ENCODE measurements at regions of chr11 and their contacts with region 1.

Region 1: DNA sequence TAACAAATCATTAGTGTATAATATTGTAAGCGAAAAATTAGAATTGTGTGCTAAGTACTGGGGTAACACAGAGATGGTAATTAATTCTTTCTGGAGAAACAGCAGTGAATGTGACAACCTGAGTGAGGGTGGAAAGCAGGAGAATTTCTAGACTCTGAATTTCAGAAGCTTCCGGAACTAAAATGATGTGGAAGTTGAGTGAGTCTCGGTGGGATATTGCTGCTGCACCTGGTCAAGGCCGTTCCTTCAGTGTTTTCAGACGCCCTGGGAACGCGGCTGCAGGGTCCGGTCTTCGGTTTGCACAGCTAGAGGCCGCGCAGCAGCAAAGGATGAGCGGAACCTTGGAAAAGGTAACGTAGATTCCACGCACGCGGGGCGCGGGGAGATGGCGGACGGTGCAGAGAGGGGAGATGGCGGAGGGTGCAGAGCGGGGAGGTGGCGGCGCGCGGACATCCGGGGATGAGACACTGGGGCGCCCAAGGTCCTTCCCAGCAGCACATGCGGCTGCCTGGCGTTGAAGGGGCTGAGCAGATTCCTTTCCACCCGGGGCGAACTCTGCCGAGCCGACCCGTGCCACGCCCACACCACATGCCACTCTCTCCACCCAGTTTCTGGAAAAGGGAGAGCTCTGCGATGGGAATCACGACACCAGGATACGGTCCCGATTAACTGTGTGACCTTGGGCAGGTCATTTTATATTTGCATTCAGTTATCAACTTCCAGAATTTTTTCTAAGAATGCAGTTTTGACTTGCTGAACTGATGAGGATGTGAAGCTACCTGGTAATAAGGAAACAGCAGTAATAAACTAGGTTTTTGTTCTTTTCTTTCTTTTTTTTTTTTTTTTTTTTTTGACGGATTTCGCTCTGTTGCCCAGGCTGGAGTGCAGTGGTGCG is at the start of gene MRPL48:
- DNase-seq: peak; percentile 69 to 91 (median 84)
- H3K4me3 ChIP-seq: peak within 1 kb of the TSS; percentile 54 to 88 (median 75)
- H3K27ac ChIP-seq: peak within 1 kb of the TSS; percentile 83 to 99 (median 94)
- H3K27me3 ChIP-seq: no peaks in the 10 kb centered on the region
- CTCF ChIP-seq: peak in 31 of 56 donors; percentile 4 to 50 (median 24)
- total RNA-seq, gene MRPL48: 24.2 to 72.9 (median 43.4) TPM

Region 2: DNA sequence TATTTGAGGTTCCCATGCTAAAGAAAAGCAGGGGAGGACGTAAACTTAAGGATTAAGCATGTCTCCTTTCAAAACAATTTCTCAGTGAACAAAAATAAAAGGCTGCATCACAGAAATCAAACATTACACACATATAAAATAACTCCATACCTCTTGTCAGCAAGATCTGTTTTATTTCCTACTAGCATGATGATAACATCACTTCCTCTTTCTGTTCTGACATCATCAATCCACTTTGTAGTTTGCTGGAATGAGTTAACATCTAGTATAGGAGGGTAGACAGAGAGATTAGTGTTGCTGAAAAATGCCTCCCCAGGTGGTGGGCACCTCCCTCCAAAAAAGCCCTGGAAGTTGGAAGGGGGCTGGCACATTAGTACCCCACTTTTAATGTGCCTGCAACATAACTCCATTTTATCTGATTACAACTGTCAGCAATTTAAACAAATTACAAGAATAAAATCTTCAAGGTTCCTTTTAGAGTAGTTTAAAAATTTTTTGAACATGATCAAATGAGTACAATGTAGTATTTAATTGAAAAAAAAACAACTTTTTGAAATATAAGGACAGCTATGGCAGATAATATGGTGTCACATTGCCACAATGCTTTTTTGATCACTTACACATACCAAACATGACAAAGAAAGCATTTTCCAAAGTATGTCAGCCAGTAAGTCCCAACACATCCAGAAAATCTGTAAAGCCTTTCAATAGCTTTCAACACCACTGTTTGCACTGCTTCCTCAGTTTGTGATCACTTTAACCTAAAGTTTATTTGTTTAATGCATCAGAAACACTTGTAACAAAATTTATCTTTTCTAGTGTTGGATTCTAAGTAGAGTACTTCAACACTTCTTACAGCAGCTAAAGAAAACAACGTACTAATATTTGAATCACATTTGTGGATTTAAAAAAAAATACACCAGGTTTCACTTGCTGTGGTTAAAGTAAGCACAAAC is 71.5 kb before region 1 on chr11:
- intact Hi-C with region 1: no loop called
- DNase-seq: no peak
- H3K4me3 ChIP-seq: peak overlapping the region in 3 of 59 donors; percentile 2 to 17 (median 5)
- H3K27ac ChIP-seq: peak overlapping the region; percentile 0 to 82 (median 64)
- H3K27me3 ChIP-seq: no peaks in the 10 kb centered on the region
- CTCF ChIP-seq: no peak

Region 3: DNA sequence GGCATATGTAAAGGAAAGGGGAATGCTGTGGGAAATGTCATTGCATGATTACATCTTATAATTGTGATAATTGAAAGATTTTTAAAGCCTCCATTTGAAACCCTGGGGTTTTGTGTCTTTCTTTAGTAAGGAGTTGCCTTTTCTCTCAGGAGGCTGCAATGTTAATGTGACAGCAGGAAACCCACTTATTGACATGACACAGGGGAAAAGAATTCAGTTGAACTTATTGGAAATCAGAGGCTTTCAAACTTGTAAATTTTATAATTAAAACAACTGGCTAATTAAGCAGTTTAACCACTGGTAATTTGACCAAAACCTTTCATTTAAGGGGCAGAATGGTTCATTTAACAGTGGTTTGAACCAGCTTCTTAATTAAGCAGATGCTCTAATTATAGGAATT is 31.0 kb after region 1 on chr11:
- intact Hi-C with region 1: no loop called
- DNase-seq: no peak
- H3K4me3 ChIP-seq: no peak overlapping the region
- H3K27ac ChIP-seq: no peak overlapping the region
- H3K27me3 ChIP-seq: no peaks in the 10 kb centered on the region
- CTCF ChIP-seq: no peak

Region 4: DNA sequence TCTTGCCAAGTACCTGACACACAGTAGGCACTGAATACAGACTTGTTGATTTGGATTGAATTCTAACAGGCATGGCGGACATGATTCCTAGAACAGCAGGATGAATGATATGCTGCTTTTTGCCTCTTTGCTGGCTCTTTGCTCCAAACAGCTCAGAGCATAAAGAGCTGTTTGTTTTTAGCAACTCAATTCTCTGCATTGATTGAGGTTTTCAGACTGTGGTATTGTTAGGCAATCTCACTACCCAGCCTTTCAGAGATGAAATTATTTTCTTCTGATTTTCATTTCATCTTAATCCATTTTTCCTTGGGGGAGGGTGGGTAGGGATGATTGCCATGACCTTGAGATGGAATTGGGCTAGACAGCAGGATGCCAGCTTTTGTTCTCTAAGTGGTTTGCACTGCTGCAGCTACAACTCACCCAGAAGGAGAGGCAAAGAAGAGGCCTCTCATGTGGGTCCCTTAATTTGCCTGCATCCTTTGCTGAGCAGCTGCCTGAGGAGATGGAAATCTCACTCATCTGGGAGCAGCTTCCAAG is 68.2 kb after region 1 on chr11:
- intact Hi-C with region 1: loop called in 1 of 2 experiments (anchors 5 kb)
- DNase-seq: peak in 3 of 10 donors; percentile 30 to 41 (median 38)
- H3K4me3 ChIP-seq: peak overlapping the region in 25 of 59 donors; percentile 0 to 35 (median 16)
- H3K27ac ChIP-seq: peak overlapping the region; percentile 78 to 99 (median 96)
- H3K27me3 ChIP-seq: no peaks in the 10 kb centered on the region
- CTCF ChIP-seq: peak in 1 of 56 donors; percentile 13

Region 5: GRCh38 chr11:73876424-73877300 is 88.8 kb after region 1 on chr11 and contains the starts of genes COA4 and PAAF1:
- intact Hi-C with region 1: loop called (anchors 2 kb)
- DNase-seq: peak; percentile 91 to 98 (median 96)
- H3K4me3 ChIP-seq: peak within 1 kb of the TSS; percentile 59 to 99 (median 83)
- H3K27ac ChIP-seq: peak within 1 kb of the TSS in 58 of 59 donors; percentile 38 to 91 (median 82)
- H3K27me3 ChIP-seq: no peaks in the 10 kb centered on the region
- CTCF ChIP-seq: peak in 26 of 56 donors; percentile 8 to 53 (median 20)
- total RNA-seq, gene COA4: 20.8 to 58.4 (median 35.4) TPM
- total RNA-seq, gene PAAF1: 27.3 to 94.7 (median 55.4) TPM

Region 6: DNA sequence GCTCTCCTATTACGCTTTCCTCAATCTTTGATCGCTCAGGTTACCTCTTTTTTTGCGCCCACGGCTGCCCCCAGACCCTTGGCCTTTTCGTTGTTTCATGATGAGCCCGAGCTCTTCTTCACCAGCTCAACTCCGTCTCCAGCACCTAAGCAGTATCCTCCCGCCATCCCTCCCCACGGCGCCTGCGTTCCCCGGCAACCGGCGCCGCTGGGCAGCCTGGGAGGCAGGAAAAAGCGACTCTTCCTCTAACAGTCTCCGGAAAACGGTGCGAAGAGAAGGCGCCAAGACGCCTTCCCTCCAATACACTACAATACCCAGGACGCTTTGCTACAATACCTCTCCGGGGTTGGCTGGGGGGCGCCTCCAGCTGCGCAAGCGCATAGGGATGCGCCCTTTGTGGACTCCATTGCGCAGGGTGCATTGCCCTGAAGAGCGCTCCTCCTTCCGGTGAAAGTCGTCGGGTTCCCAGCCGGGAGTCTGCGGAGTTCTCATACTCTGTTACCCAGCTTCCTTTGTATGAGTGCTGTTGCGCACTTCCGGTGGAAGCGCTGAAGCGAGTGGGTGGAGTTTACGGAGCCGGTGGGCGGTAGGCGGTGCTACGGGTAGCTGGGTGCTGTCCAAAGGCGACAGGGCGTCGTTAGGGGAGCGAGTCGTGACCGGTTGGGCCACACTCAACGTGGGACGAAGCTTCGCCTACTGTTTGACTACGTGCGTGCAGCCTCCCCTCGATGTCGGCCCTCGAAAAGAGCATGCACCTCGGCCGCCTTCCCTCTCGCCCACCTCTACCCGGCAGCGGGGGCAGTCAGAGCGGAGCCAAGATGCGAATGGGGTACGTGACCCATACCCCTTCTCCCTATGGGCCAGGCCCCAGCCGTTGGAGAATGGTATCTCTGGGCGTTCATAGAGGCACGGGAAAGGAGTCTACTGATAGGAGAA is 383.1 kb after region 1 on chr11 and contains the starts of genes C2CD3 and PPME1:
- intact Hi-C with region 1: loop called in 1 of 2 experiments (anchors 5 kb)
- DNase-seq: peak; percentile 94 to 99 (median 98)
- H3K4me3 ChIP-seq: peak within 1 kb of the TSS; percentile 67 to 99 (median 87)
- H3K27ac ChIP-seq: peak within 1 kb of the TSS; percentile 24 to 93 (median 86)
- H3K27me3 ChIP-seq: no peaks in the 10 kb centered on the region
- CTCF ChIP-seq: peak in 54 of 56 donors; percentile 26 to 79 (median 60)
- total RNA-seq, gene C2CD3: 30.0 to 76.8 (median 42.6) TPM
- total RNA-seq, gene PPME1: 48.5 to 158 (median 108) TPM